ENCODE measurements at regions of chr15 and their contacts with region 1.

Region 1: GRCh38 chr15:62066663-62067447 is at the start of gene C2CD4A:
- DNase-seq: peak; percentile 31 to 79 (median 50)
- ATAC-seq: peak; percentile 81
- H3K4me3 ChIP-seq: peak within 1 kb of the TSS; percentile 63
- H3K4me3 Mint-ChIP-seq: peak within 1 kb of the TSS; percentile 88
- H3K27ac ChIP-seq: no peak within 1 kb of the TSS
- H3K27ac Mint-ChIP-seq: no peak within 1 kb of the TSS
- H3K4me1 ChIP-seq: peaks cover 28% of the 10 kb centered on the region
- H3K4me1 Mint-ChIP-seq: peaks cover 26% of the 10 kb centered on the region
- H3K27me3 ChIP-seq: peaks cover 14 to 24% of the 10 kb centered on the region in 2 experiments
- H3K27me3 Mint-ChIP-seq: peaks cover 32% of the 10 kb centered on the region
- CTCF ChIP-seq: peak; percentile 13
- total RNA-seq, gene C2CD4A: 0.19 to 0.34 TPM

Region 2: GRCh38 chr15:61871926-61872522 is 194.8 kb before region 1 on chr15:
- CTCF ChIA-PET with region 1: no interaction called
- POLR2A ChIA-PET with region 1: no interaction called
- intact Hi-C with region 1: loop called (anchors 1 to 5 kb)
- DNase-seq: peak in 3 of 14 experiments; percentile 11 to 39 (median 18)
- ATAC-seq: no peak
- H3K4me3 ChIP-seq: no peak overlapping the region
- H3K4me3 Mint-ChIP-seq: no peak overlapping the region
- H3K27ac ChIP-seq: no peak overlapping the region
- H3K27ac Mint-ChIP-seq: no peak overlapping the region
- H3K4me1 ChIP-seq: no peaks in the 10 kb centered on the region
- H3K4me1 Mint-ChIP-seq: no peaks in the 10 kb centered on the region
- H3K27me3 ChIP-seq: no peaks in the 10 kb centered on the region
- H3K27me3 Mint-ChIP-seq: no peaks in the 10 kb centered on the region
- CTCF ChIP-seq: peak; percentile 61

Region 3: GRCh38 chr15:61974759-61975158 is 92.1 kb before region 1 on chr15:
- CTCF ChIA-PET with region 1: no interaction called
- POLR2A ChIA-PET with region 1: no interaction called
- intact Hi-C with region 1: loop called (anchors 5 kb)
- DNase-seq: no peak
- ATAC-seq: no peak
- H3K4me3 ChIP-seq: no peak overlapping the region
- H3K4me3 Mint-ChIP-seq: no peak overlapping the region
- H3K27ac ChIP-seq: no peak overlapping the region
- H3K27ac Mint-ChIP-seq: no peak overlapping the region
- H3K4me1 ChIP-seq: no peaks in the 10 kb centered on the region
- H3K4me1 Mint-ChIP-seq: peaks cover 14% of the 10 kb centered on the region
- H3K27me3 ChIP-seq: no peaks in the 10 kb centered on the region
- H3K27me3 Mint-ChIP-seq: no peaks in the 10 kb centered on the region
- CTCF ChIP-seq: no peak

Region 4: DNA sequence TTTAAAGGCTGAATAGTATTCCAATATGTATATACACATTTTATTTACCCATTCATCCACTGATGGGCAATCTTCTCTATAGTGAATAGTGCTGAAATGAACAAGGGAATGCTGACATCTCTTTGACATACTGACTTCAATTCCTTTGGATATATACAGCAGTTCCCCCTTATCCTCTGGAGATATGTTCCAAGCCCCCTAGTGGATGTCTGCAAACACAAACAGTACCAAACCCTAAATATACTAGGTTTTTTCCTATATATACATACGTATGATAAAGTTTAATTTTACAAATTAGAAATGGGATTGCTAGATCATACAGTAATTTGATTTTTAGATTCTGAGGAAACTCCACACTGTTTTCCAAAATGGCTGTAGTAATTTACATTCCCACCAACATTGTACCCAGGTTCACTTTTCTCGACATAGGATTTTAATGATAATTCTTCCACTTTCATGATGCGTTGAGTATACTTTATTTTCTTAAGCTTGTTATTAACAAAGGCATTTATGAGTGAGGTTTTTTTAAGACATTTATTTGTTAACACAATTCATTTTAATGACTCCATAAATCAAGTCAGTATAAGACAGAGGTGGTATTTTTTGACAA is 44.8 kb before region 1 on chr15:
- CTCF ChIA-PET with region 1: no interaction called
- POLR2A ChIA-PET with region 1: no interaction called
- intact Hi-C with region 1: loop called in 1 of 2 experiments (anchors 5 kb)
- DNase-seq: no peak
- ATAC-seq: no peak
- H3K4me3 ChIP-seq: no peak overlapping the region
- H3K4me3 Mint-ChIP-seq: no peak overlapping the region
- H3K27ac ChIP-seq: no peak overlapping the region
- H3K27ac Mint-ChIP-seq: no peak overlapping the region
- H3K4me1 ChIP-seq: no peaks in the 10 kb centered on the region
- H3K4me1 Mint-ChIP-seq: peaks cover 5% of the 10 kb centered on the region
- H3K27me3 ChIP-seq: no peaks in the 10 kb centered on the region
- H3K27me3 Mint-ChIP-seq: no peaks in the 10 kb centered on the region
- CTCF ChIP-seq: no peak

Region 5: GRCh38 chr15:62164500-62165103 is 97.7 kb after region 1 on chr15:
- CTCF ChIA-PET with region 1: no interaction called
- POLR2A ChIA-PET with region 1: no interaction called
- intact Hi-C with region 1: loop called in 1 of 2 experiments (anchors 5 kb)
- DNase-seq: peak in 2 of 14 experiments; percentile 11 to 25
- ATAC-seq: peak; percentile 41
- H3K4me3 ChIP-seq: peak overlapping the region; percentile 33
- H3K4me3 Mint-ChIP-seq: peak overlapping the region; percentile 88
- H3K27ac ChIP-seq: no peak overlapping the region
- H3K27ac Mint-ChIP-seq: no peak overlapping the region
- H3K4me1 ChIP-seq: peaks cover 10% of the 10 kb centered on the region
- H3K4me1 Mint-ChIP-seq: peaks cover 18% of the 10 kb centered on the region
- H3K27me3 ChIP-seq: peaks cover 23 to 67% of the 10 kb centered on the region in 2 experiments
- H3K27me3 Mint-ChIP-seq: peaks cover 87% of the 10 kb centered on the region
- CTCF ChIP-seq: no peak

Measured in CD4-positive, alpha-beta T cell (primary cell).